Naive thymus-derived CD4-positive, alpha-beta T cell (primary cell): ENCODE measurements at regions of chr6 and their contacts with region 1.

Region 1: DNA sequence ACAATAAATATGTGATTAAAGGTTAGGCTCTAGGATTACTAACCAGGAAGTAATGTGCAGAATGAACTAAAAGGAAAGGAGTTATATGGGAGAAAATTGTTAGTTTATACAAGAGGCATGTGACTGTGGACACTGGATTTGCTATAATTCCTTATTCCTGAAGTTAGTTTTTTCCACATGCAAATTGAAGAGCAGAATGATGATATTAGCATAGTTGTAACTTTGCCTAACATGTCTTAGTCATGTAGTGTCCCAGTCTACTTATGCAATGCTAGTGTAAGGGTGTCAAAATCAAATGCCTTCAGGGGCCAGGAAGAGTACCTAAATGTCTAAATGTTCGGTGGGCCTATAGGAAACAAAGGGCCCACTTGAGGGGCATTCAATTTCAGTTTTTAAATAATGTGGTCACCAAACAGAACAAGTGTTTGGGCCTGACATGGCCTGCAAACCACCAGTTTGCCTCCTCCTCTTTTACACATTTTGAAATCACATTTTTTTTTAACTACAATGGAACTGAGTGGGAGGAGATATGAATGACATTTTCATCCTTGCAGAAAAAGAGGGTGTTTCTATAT is 28.0 kb upstream of the CEP85L start:
- DNase-seq: no peak
- ATAC-seq: no peak
- H3K4me3 ChIP-seq: no peak overlapping the region
- H3K4me3 Mint-ChIP-seq: peak overlapping the region in 6 of 10 donors; percentile 18 to 39 (median 33)
- H3K27ac ChIP-seq: no peak overlapping the region
- H3K27ac Mint-ChIP-seq: peak overlapping the region in 5 of 9 donors; percentile 18 to 90 (median 50)
- H3K4me1 ChIP-seq: peaks cover 11 to 30% of the 10 kb centered on the region in 2 donors
- H3K4me1 Mint-ChIP-seq: peaks cover 45 to 91% (median 84%) of the 10 kb centered on the region in 7 donors
- H3K27me3 ChIP-seq: no peaks in the 10 kb centered on the region
- H3K27me3 Mint-ChIP-seq: no peaks in the 10 kb centered on the region

Region 2: GRCh38 chr6:118387764-118388701 is 291.4 kb before region 1 on chr6:
- CTCF ChIA-PET with region 1: no interaction called
- POLR2A ChIA-PET with region 1: no interaction called
- intact Hi-C with region 1: no loop called
- DNase-seq: no peak
- ATAC-seq: no peak
- H3K4me3 ChIP-seq: no peak overlapping the region
- H3K4me3 Mint-ChIP-seq: no peak overlapping the region
- H3K27ac ChIP-seq: no peak overlapping the region
- H3K27ac Mint-ChIP-seq: no peak overlapping the region
- H3K4me1 ChIP-seq: no peaks in the 10 kb centered on the region
- H3K4me1 Mint-ChIP-seq: peaks cover 0 to 9% (median 4%) of the 10 kb centered on the region in 7 donors
- H3K27me3 ChIP-seq: no peaks in the 10 kb centered on the region
- H3K27me3 Mint-ChIP-seq: no peaks in the 10 kb centered on the region

Region 3: GRCh38 chr6:118660218-118660569 is 19.2 kb before region 1 on chr6:
- CTCF ChIA-PET with region 1: no interaction called
- POLR2A ChIA-PET with region 1: interaction called, 8 read pairs
- intact Hi-C with region 1: loop called (anchors 2 kb)
- DNase-seq: peak in 8 of 9 donors; percentile 18 to 83 (median 69)
- ATAC-seq: peak; percentile 76
- H3K4me3 ChIP-seq: no peak overlapping the region
- H3K4me3 Mint-ChIP-seq: peak overlapping the region; percentile 0 to 70 (median 46)
- H3K27ac ChIP-seq: peak overlapping the region; percentile 51
- H3K27ac Mint-ChIP-seq: peak overlapping the region; percentile 48 to 92 (median 83)
- H3K4me1 ChIP-seq: peaks cover 38 to 41% of the 10 kb centered on the region in 2 donors
- H3K4me1 Mint-ChIP-seq: peaks cover 33 to 89% (median 73%) of the 10 kb centered on the region in 7 donors
- H3K27me3 ChIP-seq: no peaks in the 10 kb centered on the region
- H3K27me3 Mint-ChIP-seq: no peaks in the 10 kb centered on the region

Region 4: GRCh38 chr6:118668761-118669385 is 10.5 kb before region 1 on chr6:
- CTCF ChIA-PET with region 1: interaction called, 3 read pairs
- POLR2A ChIA-PET with region 1: interaction called, 7 read pairs
- intact Hi-C with region 1: loop called (anchors 1 to 2 kb)
- DNase-seq: no peak
- ATAC-seq: no peak
- H3K4me3 ChIP-seq: no peak overlapping the region
- H3K4me3 Mint-ChIP-seq: peak overlapping the region in 3 of 10 donors; percentile 7 to 28 (median 19)
- H3K27ac ChIP-seq: peak overlapping the region; percentile 20
- H3K27ac Mint-ChIP-seq: peak overlapping the region in 8 of 9 donors; percentile 5 to 93 (median 86)
- H3K4me1 ChIP-seq: peaks cover 4 to 28% of the 10 kb centered on the region in 2 donors
- H3K4me1 Mint-ChIP-seq: peaks cover 36 to 94% (median 87%) of the 10 kb centered on the region in 7 donors
- H3K27me3 ChIP-seq: no peaks in the 10 kb centered on the region
- H3K27me3 Mint-ChIP-seq: no peaks in the 10 kb centered on the region

Region 5: GRCh38 chr6:118697554-118697953 is 18.1 kb after region 1 on chr6:
- CTCF ChIA-PET with region 1: interaction called, 8 read pairs
- POLR2A ChIA-PET with region 1: interaction called, 10 read pairs
- intact Hi-C with region 1: no loop called
- DNase-seq: peak in 1 of 9 donors; percentile 24
- ATAC-seq: peak; percentile 37
- H3K4me3 ChIP-seq: no peak overlapping the region
- H3K4me3 Mint-ChIP-seq: peak overlapping the region in 3 of 10 donors; percentile 12 to 49 (median 15)
- H3K27ac ChIP-seq: no peak overlapping the region
- H3K27ac Mint-ChIP-seq: peak overlapping the region in 6 of 9 donors; percentile 17 to 75 (median 54)
- H3K4me1 ChIP-seq: peaks cover 0 to 6% of the 10 kb centered on the region in 2 donors
- H3K4me1 Mint-ChIP-seq: peaks cover 39 to 98% (median 85%) of the 10 kb centered on the region in 7 donors
- H3K27me3 ChIP-seq: no peaks in the 10 kb centered on the region
- H3K27me3 Mint-ChIP-seq: no peaks in the 10 kb centered on the region